ENCODE measurements at regions of chr20 and their contacts with region 1.

Region 1: GRCh38 chr20:19757487-19758132 is 448 bp upstream of the RIN2 start:
- DNase-seq: peak; percentile 69 to 93
- H3K4me3 ChIP-seq: peak overlapping the region; percentile 92 to 97
- H3K27ac ChIP-seq: peak overlapping the region; percentile 97
- H3K4me1 ChIP-seq: peaks cover 5 to 17% of the 10 kb centered on the region in 2 donors
- H3K27me3 ChIP-seq: no peaks in the 10 kb centered on the region
- CTCF ChIP-seq: no peak

Region 2: GRCh38 chr20:19583532-19584175 is 174.0 kb before region 1 on chr20:
- intact Hi-C with region 1: no loop called
- DNase-seq: peak in 1 of 2 donors; percentile 82
- H3K4me3 ChIP-seq: no peak overlapping the region
- H3K27ac ChIP-seq: no peak overlapping the region
- H3K4me1 ChIP-seq: no peaks in the 10 kb centered on the region
- H3K27me3 ChIP-seq: no peaks in the 10 kb centered on the region
- CTCF ChIP-seq: peak; percentile 74 to 84 (median 81)

Region 3: GRCh38 chr20:19692685-19693119 is 64.9 kb before region 1 on chr20:
- intact Hi-C with region 1: loop called (anchors 2 kb)
- DNase-seq: peak in 1 of 2 donors; percentile 76
- H3K4me3 ChIP-seq: peak overlapping the region in 1 of 2 donors; percentile 31
- H3K27ac ChIP-seq: no peak overlapping the region
- H3K4me1 ChIP-seq: peaks cover 2 to 11% of the 10 kb centered on the region in 2 donors
- H3K27me3 ChIP-seq: no peaks in the 10 kb centered on the region
- CTCF ChIP-seq: peak; percentile 75 to 90 (median 89)

Region 4: DNA sequence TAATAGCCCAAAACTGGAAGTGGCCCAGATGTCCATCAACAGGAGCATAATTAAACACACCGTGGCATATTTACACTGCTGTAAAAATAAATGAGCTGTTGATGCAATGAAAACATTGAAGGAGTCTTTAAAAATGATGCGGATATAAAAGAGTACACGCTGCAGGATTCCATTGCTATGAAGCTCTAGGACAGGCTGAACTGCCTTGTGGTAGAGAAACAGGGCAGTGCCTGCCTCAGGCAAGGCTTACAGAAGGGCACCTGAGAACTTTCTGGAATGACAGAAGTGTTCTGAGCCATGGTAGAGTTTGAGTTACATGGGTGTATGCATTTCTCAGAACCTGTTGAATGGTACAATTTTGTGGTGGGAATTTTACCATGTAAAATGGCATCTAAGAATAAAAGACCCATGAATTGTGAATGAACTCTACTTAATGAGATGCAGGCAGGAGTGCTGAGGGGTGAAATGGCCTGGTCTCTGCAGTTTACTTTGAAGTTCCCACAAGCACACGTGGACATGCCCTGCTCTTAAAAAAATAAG is 44.8 kb before region 1 on chr20:
- intact Hi-C with region 1: no loop called
- DNase-seq: peak in 1 of 2 donors; percentile 1
- H3K4me3 ChIP-seq: no peak overlapping the region
- H3K27ac ChIP-seq: no peak overlapping the region
- H3K4me1 ChIP-seq: peaks cover 0 to 6% of the 10 kb centered on the region in 2 donors
- H3K27me3 ChIP-seq: no peaks in the 10 kb centered on the region
- CTCF ChIP-seq: no peak

Region 5: DNA sequence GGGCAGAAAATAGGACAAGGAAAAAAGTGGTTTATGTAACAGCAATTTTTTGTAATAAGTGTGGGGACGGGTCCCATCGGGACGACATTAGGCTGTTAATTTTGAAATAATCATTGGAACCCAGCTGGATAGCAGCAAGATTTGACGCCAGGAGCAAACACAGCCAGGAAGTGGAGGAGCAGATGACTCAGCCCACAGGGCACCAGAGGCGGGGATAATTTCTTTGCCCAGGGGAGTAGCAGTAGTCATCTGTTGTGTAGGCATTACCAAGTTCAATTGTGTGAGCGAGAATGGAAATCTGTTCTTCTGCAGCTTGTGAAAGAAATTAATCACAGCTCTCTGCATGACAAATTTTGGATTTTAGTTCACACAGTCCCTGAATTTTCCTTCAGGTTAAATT is 22.2 kb before region 1 on chr20:
- intact Hi-C with region 1: loop called (anchors 1 kb)
- DNase-seq: peak; percentile 43 to 93
- H3K4me3 ChIP-seq: peak overlapping the region in 1 of 2 donors; percentile 10
- H3K27ac ChIP-seq: peak overlapping the region; percentile 69 to 71
- H3K4me1 ChIP-seq: peaks cover 0 to 11% of the 10 kb centered on the region in 2 donors
- H3K27me3 ChIP-seq: no peaks in the 10 kb centered on the region
- CTCF ChIP-seq: no peak

Region 6: DNA sequence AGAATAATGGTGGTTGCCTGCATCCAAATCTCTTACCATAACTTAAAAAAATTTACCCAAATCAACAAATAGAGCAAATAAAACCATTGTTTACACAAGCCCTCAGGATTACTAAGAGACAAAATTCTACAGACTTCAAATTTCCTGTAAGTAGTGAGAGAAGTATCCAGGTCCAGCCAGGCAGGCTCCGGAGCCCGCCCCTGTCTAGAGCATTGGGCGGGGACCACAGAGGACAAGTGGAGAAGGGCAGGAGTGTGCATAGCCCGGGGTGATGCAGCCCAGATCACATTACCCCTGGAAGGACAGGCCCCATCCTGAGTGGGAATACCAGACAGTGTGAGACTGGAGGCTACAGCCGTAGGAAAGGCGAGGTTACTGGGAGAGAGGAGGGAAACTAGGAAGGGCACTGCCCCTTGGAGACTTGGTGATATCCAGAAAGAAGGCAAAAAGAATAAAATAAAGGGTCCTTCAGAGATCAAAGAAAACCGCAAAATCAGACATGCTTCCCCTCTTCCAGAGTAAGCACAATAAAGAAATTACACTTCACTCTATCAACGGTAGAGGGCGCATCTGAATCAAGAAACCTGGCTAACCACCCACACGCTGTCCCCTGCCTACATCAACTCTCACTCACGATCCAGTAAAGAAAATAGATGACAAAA is 27.0 kb after region 1 on chr20:
- intact Hi-C with region 1: loop called (anchors 2 kb)
- DNase-seq: peak in 1 of 2 donors; percentile 69
- H3K4me3 ChIP-seq: no peak overlapping the region
- H3K27ac ChIP-seq: peak overlapping the region; percentile 12 to 57
- H3K4me1 ChIP-seq: peaks cover 4 to 20% of the 10 kb centered on the region in 2 donors
- H3K27me3 ChIP-seq: no peaks in the 10 kb centered on the region
- CTCF ChIP-seq: peak; percentile 63 to 84 (median 75)

Region 7: DNA sequence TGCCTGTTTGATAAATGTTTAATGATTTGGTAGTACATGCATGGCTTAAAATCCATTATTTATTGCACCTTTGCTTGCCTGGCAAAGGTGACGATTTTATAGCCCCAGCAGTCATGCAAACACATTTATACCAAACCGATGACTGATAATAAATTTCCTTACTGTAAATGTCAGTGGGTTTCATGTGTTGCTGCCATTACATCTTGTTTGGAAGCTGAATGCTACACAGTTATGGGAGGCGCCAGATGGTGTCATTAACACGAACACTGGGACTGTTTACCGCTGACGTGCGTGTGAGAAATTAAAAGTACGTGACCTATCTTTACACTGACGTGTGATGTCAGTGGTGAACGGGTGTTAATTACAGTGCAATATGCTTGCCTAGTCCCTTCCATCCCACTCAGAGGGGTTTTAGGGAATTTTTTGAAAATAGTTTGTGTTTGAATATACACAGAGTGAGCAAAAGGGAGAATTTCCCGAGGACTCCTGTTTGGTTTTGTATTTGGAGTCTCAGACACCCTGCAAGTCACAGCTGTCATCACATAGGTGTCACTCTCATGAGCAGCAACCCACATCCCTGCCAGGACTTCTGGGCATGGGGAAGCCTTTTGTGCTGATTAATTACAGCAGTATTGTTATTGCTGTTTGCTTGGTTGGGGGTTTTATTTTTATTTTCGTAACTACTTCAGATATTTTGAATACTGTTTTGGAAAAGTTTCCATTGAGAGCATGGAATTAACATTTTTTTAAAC is 458.5 kb after region 1 on chr20:
- intact Hi-C with region 1: no loop called
- DNase-seq: no peak
- H3K4me3 ChIP-seq: no peak overlapping the region
- H3K27ac ChIP-seq: no peak overlapping the region
- H3K4me1 ChIP-seq: no peaks in the 10 kb centered on the region
- H3K27me3 ChIP-seq: no peaks in the 10 kb centered on the region
- CTCF ChIP-seq: no peak